CD8-positive, alpha-beta T cell (primary cell): ENCODE measurements at regions of chr15 and their contacts with region 1.

Region 1: GRCh38 chr15:91852741-91853510 is 582 bp upstream of the SLCO3A1 start:
- DNase-seq: peak; percentile 58 to 88 (median 72)
- ATAC-seq: peak; percentile 57
- H3K4me3 ChIP-seq: peak overlapping the region; percentile 59 to 62
- H3K4me3 Mint-ChIP-seq: peak overlapping the region; percentile 86
- H3K27ac ChIP-seq: peak overlapping the region; percentile 56 to 57
- H3K27ac Mint-ChIP-seq: peak overlapping the region; percentile 91
- H3K4me1 ChIP-seq: peaks cover 56% of the 10 kb centered on the region
- H3K4me1 Mint-ChIP-seq: peaks cover 58% of the 10 kb centered on the region
- H3K27me3 ChIP-seq: no peaks in the 10 kb centered on the region
- H3K27me3 Mint-ChIP-seq: no peaks in the 10 kb centered on the region
- CTCF ChIP-seq: peak; percentile 71

Region 2: GRCh38 chr15:91919014-91919534 is 66.1 kb after region 1 on chr15:
- CTCF ChIA-PET with region 1: interaction called, 4 read pairs
- POLR2A ChIA-PET with region 1: no interaction called
- intact Hi-C with region 1: loop called in 1 of 2 experiments (anchors 2 kb)
- DNase-seq: no peak
- ATAC-seq: no peak
- H3K4me3 ChIP-seq: no peak overlapping the region
- H3K4me3 Mint-ChIP-seq: no peak overlapping the region
- H3K27ac ChIP-seq: no peak overlapping the region
- H3K27ac Mint-ChIP-seq: no peak overlapping the region
- H3K4me1 ChIP-seq: peaks cover 8% of the 10 kb centered on the region
- H3K4me1 Mint-ChIP-seq: peaks cover 27% of the 10 kb centered on the region
- H3K27me3 ChIP-seq: no peaks in the 10 kb centered on the region
- H3K27me3 Mint-ChIP-seq: no peaks in the 10 kb centered on the region
- CTCF ChIP-seq: no peak

Region 3: GRCh38 chr15:91942676-91943576 is 90.0 kb after region 1 on chr15:
- CTCF ChIA-PET with region 1: interaction called, 44 read pairs
- POLR2A ChIA-PET with region 1: interaction called, 5 read pairs
- intact Hi-C with region 1: loop called (anchors 2 kb)
- DNase-seq: peak in 6 of 9 experiments; percentile 11 to 72 (median 37)
- ATAC-seq: peak; percentile 71
- H3K4me3 ChIP-seq: no peak overlapping the region
- H3K4me3 Mint-ChIP-seq: peak overlapping the region; percentile 1
- H3K27ac ChIP-seq: no peak overlapping the region
- H3K27ac Mint-ChIP-seq: peak overlapping the region; percentile 43
- H3K4me1 ChIP-seq: no peaks in the 10 kb centered on the region
- H3K4me1 Mint-ChIP-seq: peaks cover 32% of the 10 kb centered on the region
- H3K27me3 ChIP-seq: no peaks in the 10 kb centered on the region
- H3K27me3 Mint-ChIP-seq: no peaks in the 10 kb centered on the region
- CTCF ChIP-seq: no peak

Region 4: GRCh38 chr15:92077353-92078085 is 224.6 kb after region 1 on chr15:
- CTCF ChIA-PET with region 1: interaction called, 34 read pairs
- POLR2A ChIA-PET with region 1: no interaction called
- intact Hi-C with region 1: loop called (anchors 1 to 2 kb)
- DNase-seq: peak in 8 of 9 experiments; percentile 35 to 67 (median 52)
- ATAC-seq: no peak
- H3K4me3 ChIP-seq: no peak overlapping the region
- H3K4me3 Mint-ChIP-seq: no peak overlapping the region
- H3K27ac ChIP-seq: no peak overlapping the region
- H3K27ac Mint-ChIP-seq: no peak overlapping the region
- H3K4me1 ChIP-seq: peaks cover 7% of the 10 kb centered on the region
- H3K4me1 Mint-ChIP-seq: peaks cover 23% of the 10 kb centered on the region
- H3K27me3 ChIP-seq: no peaks in the 10 kb centered on the region
- H3K27me3 Mint-ChIP-seq: no peaks in the 10 kb centered on the region
- CTCF ChIP-seq: peak; percentile 51